ENCODE measurements at regions of chr12 and their contacts with region 1.

Region 1: GRCh38 chr12:91577586-91578539 is 395.2 kb upstream of the DCN start:
- DNase-seq: peak; percentile 35
- ATAC-seq: peak; percentile 74
- H3K4me3 ChIP-seq: peak overlapping the region; percentile 39; the same call in 1 of the 2 replicates
- H3K27ac ChIP-seq: no peak overlapping the region
- H3K4me1 ChIP-seq: no peaks in the 10 kb centered on the region
- H3K27me3 ChIP-seq: no peaks in the 10 kb centered on the region; the same call in 1 of the 2 replicates
- CTCF ChIP-seq: peak; percentile 59
- POLR2A ChIP-seq: no peak
- RAD21 ChIP-seq: peak; percentile 52

Region 2: GRCh38 chr12:91561958-91562875 is 15.6 kb before region 1 on chr12:
- CTCF ChIA-PET with region 1: interaction called, 13 read pairs
- POLR2A ChIA-PET with region 1: no interaction called
- dilution Hi-C with region 1: no loop called
- in situ Hi-C with region 1: no loop called
- intact Hi-C with region 1: no loop called
- DNase-seq: peak; percentile 2
- ATAC-seq: no peak; the same call in 1 of the 2 replicates
- H3K4me3 ChIP-seq: no peak overlapping the region
- H3K27ac ChIP-seq: no peak overlapping the region
- H3K4me1 ChIP-seq: no peaks in the 10 kb centered on the region
- H3K27me3 ChIP-seq: no peaks in the 10 kb centered on the region
- CTCF ChIP-seq: no peak
- POLR2A ChIP-seq: no peak
- RAD21 ChIP-seq: no peak

Region 3: GRCh38 chr12:91617830-91618702 is 40.2 kb after region 1 on chr12:
- CTCF ChIA-PET with region 1: no interaction called
- POLR2A ChIA-PET with region 1: no interaction called
- dilution Hi-C with region 1: no loop called
- in situ Hi-C with region 1: no loop called
- intact Hi-C with region 1: no loop called
- DNase-seq: no peak
- ATAC-seq: no peak
- H3K4me3 ChIP-seq: no peak overlapping the region
- H3K27ac ChIP-seq: no peak overlapping the region
- H3K4me1 ChIP-seq: no peaks in the 10 kb centered on the region
- H3K27me3 ChIP-seq: no peaks in the 10 kb centered on the region; the same call in 1 of the 2 replicates
- CTCF ChIP-seq: no peak
- POLR2A ChIP-seq: no peak
- RAD21 ChIP-seq: no peak